Activated CD8-positive, alpha-beta memory T cell treated with anti-CD3 and anti-CD28 coated beads, Interleukin-2, amount 10 ng/mL, durations not matched to agents 7 days and 5 days (primary cell): ENCODE measurements at regions of chr11 and their contacts with region 1.

Region 1: GRCh38 chr11:67265633-67266423 is 445 bp upstream of the GRK2 start:
- DNase-seq: peak; percentile 82
- ATAC-seq: peak; percentile 48
- H3K4me3 Mint-ChIP-seq: peak overlapping the region; percentile 62
- H3K27ac Mint-ChIP-seq: peak overlapping the region; percentile 79
- H3K4me1 Mint-ChIP-seq: peaks cover 68% of the 10 kb centered on the region
- H3K27me3 Mint-ChIP-seq: peaks cover 4% of the 10 kb centered on the region

Region 2: GRCh38 chr11:67239783-67240575 is 25.8 kb before region 1 on chr11:
- CTCF ChIA-PET with region 1: interaction called, 20 read pairs
- DNase-seq: peak; percentile 99
- ATAC-seq: peak; percentile 94
- H3K4me3 Mint-ChIP-seq: peak overlapping the region; percentile 95
- H3K27ac Mint-ChIP-seq: peak overlapping the region; percentile 93
- H3K4me1 Mint-ChIP-seq: peaks cover 44% of the 10 kb centered on the region
- H3K27me3 Mint-ChIP-seq: no peaks in the 10 kb centered on the region

Region 3: GRCh38 chr11:67252831-67253239 is 13.0 kb before region 1 on chr11:
- CTCF ChIA-PET with region 1: interaction called, 37 read pairs
- DNase-seq: peak; percentile 73
- ATAC-seq: peak; percentile 85
- H3K4me3 Mint-ChIP-seq: no peak overlapping the region
- H3K27ac Mint-ChIP-seq: peak overlapping the region; percentile 58
- H3K4me1 Mint-ChIP-seq: peaks cover 61% of the 10 kb centered on the region
- H3K27me3 Mint-ChIP-seq: no peaks in the 10 kb centered on the region

Region 4: DNA sequence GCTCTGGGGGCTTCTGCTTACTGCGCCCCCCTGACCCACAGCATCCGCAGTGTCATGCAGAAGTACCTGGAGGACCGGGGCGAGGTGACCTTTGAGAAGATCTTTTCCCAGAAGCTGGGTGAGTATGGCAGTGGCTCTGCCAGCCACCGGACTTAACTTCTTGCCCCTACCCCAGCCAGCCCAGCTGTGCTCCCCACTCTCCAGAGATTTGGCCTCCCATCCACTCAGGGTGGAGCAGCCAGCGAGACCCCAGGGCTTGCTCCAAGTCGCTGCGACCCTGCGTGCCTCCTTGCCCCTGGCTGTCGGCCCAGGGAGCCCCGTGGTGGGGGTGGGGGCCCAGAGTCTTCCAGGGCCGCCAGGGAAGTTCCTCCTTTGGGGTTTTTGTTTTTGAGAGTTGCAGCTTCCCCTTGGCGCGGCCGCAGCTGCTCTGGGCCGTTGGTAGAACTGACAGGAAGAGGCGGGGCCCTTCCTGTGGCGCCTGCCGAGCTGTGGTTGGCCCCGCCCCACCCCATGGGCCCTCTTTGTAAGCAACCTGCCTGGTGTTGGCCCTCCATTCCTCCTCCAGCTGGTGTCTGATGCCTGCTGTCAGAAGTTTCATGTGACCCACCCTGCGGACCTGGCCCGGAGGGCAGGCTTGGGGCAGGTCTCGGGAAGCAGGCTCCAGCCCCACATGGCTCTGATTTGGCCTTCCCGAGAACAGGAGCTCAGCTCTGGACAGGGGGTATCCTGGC is 11.6 kb after region 1 on chr11:
- CTCF ChIA-PET with region 1: interaction called, 137 read pairs
- DNase-seq: peak; percentile 95
- ATAC-seq: peak; percentile 86
- H3K4me3 Mint-ChIP-seq: peak overlapping the region; percentile 57
- H3K27ac Mint-ChIP-seq: peak overlapping the region; percentile 86
- H3K4me1 Mint-ChIP-seq: peaks cover 78% of the 10 kb centered on the region
- H3K27me3 Mint-ChIP-seq: no peaks in the 10 kb centered on the region

Region 5: DNA sequence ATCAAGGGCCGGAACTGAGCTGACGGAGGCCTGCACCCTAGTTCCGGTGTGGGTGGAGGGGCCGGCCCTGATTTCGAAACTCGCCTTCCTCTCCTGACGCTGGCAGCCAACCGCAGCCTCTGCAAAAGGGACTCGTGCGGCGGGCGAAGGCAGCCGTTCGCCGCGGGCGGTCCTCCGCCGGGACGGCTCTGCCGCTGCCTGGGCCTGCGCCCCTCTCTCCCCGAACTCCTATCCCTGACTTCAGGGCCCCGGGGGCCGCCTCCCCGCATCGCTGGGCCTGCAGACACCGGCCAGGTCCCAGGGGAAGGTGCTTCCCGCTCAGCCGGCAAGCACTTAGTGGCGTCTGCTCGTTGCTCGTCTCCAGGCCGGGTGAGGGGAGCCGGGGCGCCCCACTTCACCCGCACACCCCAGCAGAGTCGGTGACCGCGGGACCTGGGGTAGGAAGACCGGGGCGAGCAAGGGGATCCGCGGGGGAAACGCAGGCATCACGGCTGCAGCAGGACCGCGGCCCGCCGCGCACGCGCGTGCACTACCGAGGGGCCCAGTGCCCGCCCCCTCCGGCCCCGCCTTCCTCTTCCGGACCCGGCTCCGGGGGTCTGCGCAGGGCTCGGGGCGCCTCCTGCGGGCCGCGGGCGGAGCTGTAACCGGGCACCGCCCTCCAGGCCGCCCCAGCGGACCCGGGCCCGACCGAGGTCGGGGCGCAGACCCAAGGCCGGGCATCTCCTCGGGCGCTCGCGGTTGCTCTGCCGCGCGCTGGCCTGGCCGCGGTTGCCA is 22.8 kb after region 1 on chr11:
- CTCF ChIA-PET with region 1: interaction called, 137 read pairs
- DNase-seq: peak; percentile 96
- ATAC-seq: peak; percentile 75
- H3K4me3 Mint-ChIP-seq: peak overlapping the region; percentile 63
- H3K27ac Mint-ChIP-seq: peak overlapping the region; percentile 96
- H3K4me1 Mint-ChIP-seq: peaks cover 69% of the 10 kb centered on the region
- H3K27me3 Mint-ChIP-seq: no peaks in the 10 kb centered on the region

Region 6: GRCh38 chr11:67303132-67303834 is 37.5 kb after region 1 on chr11 and contains the start of gene SSH3:
- CTCF ChIA-PET with region 1: interaction called, 10 read pairs
- DNase-seq: peak; percentile 67
- ATAC-seq: peak; percentile 92
- H3K4me3 Mint-ChIP-seq: peak within 1 kb of the TSS; percentile 69
- H3K27ac Mint-ChIP-seq: peak within 1 kb of the TSS; percentile 24
- H3K4me1 Mint-ChIP-seq: peaks cover 12% of the 10 kb centered on the region
- H3K27me3 Mint-ChIP-seq: no peaks in the 10 kb centered on the region
- total RNA-seq, gene SSH3: 10.7 to 26.4 TPM

Region 7: DNA sequence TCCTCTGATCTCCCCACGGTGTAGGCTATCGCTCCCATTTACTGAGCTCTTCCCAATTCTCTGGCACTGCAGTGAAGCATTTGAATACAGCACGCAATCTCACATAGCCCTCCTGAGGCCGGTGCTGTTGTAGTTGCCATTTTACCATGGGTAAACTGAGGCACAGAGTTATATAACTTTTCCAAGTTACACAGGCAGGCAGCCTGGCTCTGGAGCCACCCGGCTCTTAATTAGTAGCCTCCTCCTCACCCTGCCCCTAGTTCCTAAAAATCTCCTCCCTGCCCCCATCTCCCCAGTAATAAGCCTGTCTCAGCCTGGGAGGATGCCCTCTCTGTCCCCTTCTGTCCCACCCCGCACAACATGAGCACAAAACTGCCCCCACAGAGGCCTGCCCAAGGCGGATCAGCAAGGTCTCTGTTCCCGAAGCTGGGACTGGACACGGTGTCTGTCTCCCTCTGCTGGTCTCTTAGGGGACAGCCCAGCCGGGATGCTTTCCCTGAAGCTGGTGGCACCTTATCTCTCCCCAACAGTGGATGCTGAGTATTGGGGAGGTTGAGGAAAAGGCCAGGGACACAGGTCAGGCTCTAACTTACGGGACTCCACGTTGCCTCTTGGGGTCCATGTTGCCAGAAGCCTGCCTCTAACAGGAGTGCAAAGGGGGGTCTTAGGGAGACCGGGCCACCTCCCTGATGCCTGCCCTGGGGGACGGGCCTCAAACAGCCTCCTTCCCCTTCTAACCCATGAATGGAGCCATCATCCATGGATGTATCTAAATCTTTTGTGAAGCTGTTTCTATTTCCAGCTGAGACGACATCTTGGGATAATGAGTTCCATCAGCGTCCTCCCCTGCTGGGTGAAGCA is 116.7 kb after region 1 on chr11:
- CTCF ChIA-PET with region 1: interaction called, 21 read pairs
- DNase-seq: peak; percentile 90
- ATAC-seq: peak; percentile 94
- H3K4me3 Mint-ChIP-seq: no peak overlapping the region
- H3K27ac Mint-ChIP-seq: no peak overlapping the region
- H3K4me1 Mint-ChIP-seq: peaks cover 5% of the 10 kb centered on the region
- H3K27me3 Mint-ChIP-seq: peaks cover 38% of the 10 kb centered on the region